Natural killer cell (primary cell): ENCODE measurements at regions of chr9 and their contacts with region 1.

Region 1: GRCh38 chr9:113340017-113340699 is at the start of gene WDR31:
- DNase-seq: peak; percentile 66 to 87
- ATAC-seq: peak; percentile 91 to 99 (median 93)
- H3K4me3 ChIP-seq: peak within 1 kb of the TSS; percentile 69
- H3K4me3 Mint-ChIP-seq: peak within 1 kb of the TSS; percentile 87
- H3K27ac ChIP-seq: no peak within 1 kb of the TSS
- H3K27ac Mint-ChIP-seq: peak within 1 kb of the TSS; percentile 34 to 75
- H3K4me1 ChIP-seq: peaks cover 8% of the 10 kb centered on the region
- H3K4me1 Mint-ChIP-seq: peaks cover 8 to 13% of the 10 kb centered on the region in 2 donors
- H3K27me3 ChIP-seq: no peaks in the 10 kb centered on the region
- H3K27me3 Mint-ChIP-seq: peaks cover 0 to 5% of the 10 kb centered on the region in 2 donors
- CTCF ChIP-seq: no peak
- total RNA-seq, gene WDR31: 0.16 to 0.55 (median 0.19) TPM

Region 2: GRCh38 chr9:113187935-113188595 is 152.1 kb before region 1 on chr9:
- intact Hi-C with region 1: no loop called
- DNase-seq: peak in 1 of 2 donors; percentile 13
- ATAC-seq: peak; percentile 38 to 76 (median 53)
- H3K4me3 ChIP-seq: no peak overlapping the region
- H3K4me3 Mint-ChIP-seq: no peak overlapping the region
- H3K27ac ChIP-seq: no peak overlapping the region
- H3K27ac Mint-ChIP-seq: no peak overlapping the region
- H3K4me1 ChIP-seq: no peaks in the 10 kb centered on the region
- H3K4me1 Mint-ChIP-seq: no peaks in the 10 kb centered on the region
- H3K27me3 ChIP-seq: no peaks in the 10 kb centered on the region
- H3K27me3 Mint-ChIP-seq: no peaks in the 10 kb centered on the region
- CTCF ChIP-seq: no peak

Region 3: GRCh38 chr9:113299800-113300292 is 40.3 kb before region 1 on chr9:
- intact Hi-C with region 1: loop called (anchors 10 kb)
- DNase-seq: no peak
- ATAC-seq: no peak
- H3K4me3 ChIP-seq: no peak overlapping the region
- H3K4me3 Mint-ChIP-seq: no peak overlapping the region
- H3K27ac ChIP-seq: no peak overlapping the region
- H3K27ac Mint-ChIP-seq: no peak overlapping the region
- H3K4me1 ChIP-seq: no peaks in the 10 kb centered on the region
- H3K4me1 Mint-ChIP-seq: no peaks in the 10 kb centered on the region
- H3K27me3 ChIP-seq: no peaks in the 10 kb centered on the region
- H3K27me3 Mint-ChIP-seq: peaks cover 7 to 26% of the 10 kb centered on the region in 2 donors
- CTCF ChIP-seq: no peak